ENCODE measurements at regions of chr9 and their contacts with region 1.

Region 1: DNA sequence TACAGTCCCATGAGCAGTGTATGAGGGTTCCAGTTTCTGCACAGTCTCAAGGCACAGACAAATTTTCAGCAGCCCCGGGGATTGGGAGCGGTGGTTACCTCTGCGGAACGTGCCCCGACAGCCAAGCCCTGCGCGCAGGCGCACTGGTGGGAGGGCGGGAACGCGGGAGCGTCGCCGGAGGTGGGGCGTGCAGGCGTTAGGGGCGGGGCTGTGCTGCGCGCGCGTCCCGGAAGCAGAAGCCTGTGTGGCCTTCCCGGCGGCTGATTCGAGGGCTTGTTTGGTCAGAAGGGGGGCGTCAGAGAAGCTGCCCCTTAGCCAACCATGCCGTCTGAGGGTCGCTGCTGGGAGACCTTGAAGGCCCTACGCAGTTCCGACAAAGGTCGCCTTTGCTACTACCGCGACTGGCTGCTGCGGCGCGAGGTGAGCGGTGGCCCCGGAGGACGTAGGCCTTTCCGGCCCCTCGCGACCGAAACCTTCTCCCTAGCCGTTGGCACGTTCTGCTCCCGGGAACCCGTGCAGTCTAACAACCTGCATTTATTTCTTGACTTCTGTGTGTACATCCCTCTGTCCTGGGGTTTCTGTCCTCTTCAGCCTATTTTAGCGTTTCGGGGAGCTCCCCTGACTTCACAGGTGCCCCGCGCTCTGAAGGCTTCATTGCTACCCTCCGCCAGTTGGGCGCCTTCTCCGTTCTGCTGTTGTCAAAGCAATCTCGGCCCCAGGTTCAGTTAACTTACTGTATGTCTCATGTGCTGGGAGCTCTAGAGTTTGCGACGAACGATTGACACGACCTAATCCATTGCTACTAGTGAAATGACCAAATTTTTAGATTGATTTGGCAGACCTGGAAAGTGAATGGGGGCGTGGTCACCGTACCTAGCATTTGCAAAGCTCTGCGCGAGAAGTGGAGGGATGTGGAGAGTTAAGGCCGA is at the start of gene GLE1:
- DNase-seq: peak; percentile 93
- H3K4me3 Mint-ChIP-seq: peak within 1 kb of the TSS; percentile 89
- H3K27ac Mint-ChIP-seq: peak within 1 kb of the TSS; percentile 84
- H3K4me1 Mint-ChIP-seq: no peaks in the 10 kb centered on the region
- H3K27me3 Mint-ChIP-seq: no peaks in the 10 kb centered on the region
- CTCF ChIP-seq: no peak
- total RNA-seq, gene GLE1: 34.1 TPM in 2 replicates

Region 2: DNA sequence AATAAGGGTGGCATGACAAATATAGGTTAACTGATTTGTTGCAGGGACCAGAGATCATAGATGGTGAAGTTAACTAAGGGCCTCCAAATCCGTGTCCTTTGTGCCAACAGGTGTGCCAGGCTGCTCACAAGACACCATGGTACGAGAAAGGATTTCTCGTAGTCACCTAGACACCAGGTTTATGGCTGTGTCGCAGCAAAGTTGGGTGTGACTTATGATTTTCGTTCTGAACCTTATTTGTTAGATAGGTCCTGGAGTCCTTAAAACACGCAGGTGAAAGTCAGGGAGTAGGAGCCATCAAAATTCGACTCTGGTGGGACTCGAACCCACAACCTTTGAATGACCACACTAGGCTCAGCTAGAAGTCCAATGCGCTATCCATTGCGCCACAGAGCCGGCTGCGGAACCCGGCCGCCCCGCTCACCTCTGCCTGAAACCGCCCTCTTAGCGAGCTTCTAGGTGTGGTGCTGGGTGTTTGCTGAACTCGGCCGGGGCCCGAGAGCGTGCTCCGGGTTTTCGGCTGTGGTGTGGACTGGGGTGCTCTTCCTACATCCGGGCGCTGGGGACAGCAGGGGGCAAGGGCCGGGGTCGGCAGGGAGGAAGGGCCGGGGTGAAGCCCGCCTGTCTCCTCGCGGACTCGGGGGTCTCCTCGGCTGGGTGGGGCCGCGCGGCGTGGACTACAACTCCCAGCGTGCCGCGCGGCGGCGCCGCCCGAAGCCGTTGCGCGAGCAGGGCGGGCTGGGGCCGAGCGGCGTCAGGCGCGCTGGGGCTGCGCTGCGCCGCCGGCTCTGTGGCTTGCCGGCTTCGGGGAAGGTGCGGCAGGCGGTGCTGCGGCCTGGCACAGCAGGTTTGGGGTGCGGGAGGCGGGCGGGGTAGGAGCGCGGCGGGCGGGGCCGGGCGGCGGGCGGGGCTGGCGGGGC is 164.7 kb before region 1 on chr9 and contains the start of gene SLC27A4:
- CTCF ChIA-PET with region 1: no interaction called
- POLR2A ChIA-PET with region 1: no interaction called
- intact Hi-C with region 1: no loop called
- DNase-seq: peak; percentile 91
- H3K4me3 Mint-ChIP-seq: peak within 1 kb of the TSS; percentile 92
- H3K27ac Mint-ChIP-seq: peak within 1 kb of the TSS; percentile 93
- H3K4me1 Mint-ChIP-seq: peaks cover 6% of the 10 kb centered on the region
- H3K27me3 Mint-ChIP-seq: no peaks in the 10 kb centered on the region
- CTCF ChIP-seq: no peak
- total RNA-seq, gene SLC27A4: 17.0 and 18.8 TPM in 2 replicates

Region 3: DNA sequence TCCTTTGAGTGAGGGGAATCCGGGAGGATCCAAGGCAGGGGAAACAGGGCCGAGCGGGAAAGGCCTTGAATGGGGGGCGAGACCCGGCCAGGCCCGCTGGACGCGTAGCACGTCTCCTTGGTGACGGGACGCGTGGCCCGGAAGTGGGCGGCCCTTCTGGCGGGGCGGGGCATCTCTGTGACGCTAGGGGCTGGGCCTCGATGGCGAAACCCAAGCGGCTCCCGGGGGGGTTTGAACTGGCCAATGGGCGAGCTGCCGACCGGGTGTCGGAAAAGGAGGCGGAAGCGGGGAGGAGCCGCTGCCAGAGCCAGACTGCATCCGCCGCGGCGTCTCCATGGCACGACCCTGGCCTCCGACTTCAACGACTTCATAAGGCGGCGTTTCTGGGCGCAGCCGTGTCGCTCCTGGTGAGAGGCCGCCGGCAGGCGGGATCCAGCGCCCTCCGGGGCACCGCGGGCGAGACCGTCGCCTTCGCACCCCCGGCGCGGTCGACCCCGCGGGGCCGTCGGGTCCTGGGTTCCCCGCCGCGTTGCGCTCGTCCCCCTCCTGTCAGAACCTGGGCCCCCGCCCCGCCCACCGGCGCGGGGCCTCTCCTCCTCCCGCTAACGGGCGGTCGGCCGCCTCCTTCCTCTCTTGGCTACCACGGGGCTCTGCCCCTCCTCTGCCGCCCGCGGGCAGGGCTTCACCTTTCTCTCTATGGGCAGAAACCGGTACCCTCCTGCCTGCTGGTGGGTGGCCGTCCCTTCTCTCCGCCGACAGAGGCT is 48.7 kb before region 1 on chr9 and contains the start of gene ODF2:
- CTCF ChIA-PET with region 1: no interaction called
- POLR2A ChIA-PET with region 1: interaction called, 15 read pairs
- intact Hi-C with region 1: no loop called
- DNase-seq: peak; percentile 95
- H3K4me3 Mint-ChIP-seq: peak within 1 kb of the TSS; percentile 98
- H3K27ac Mint-ChIP-seq: peak within 1 kb of the TSS; percentile 96
- H3K4me1 Mint-ChIP-seq: no peaks in the 10 kb centered on the region
- H3K27me3 Mint-ChIP-seq: no peaks in the 10 kb centered on the region
- CTCF ChIP-seq: no peak
- total RNA-seq, gene ODF2: 34.4 and 37.3 TPM in 2 replicates

Region 4: DNA sequence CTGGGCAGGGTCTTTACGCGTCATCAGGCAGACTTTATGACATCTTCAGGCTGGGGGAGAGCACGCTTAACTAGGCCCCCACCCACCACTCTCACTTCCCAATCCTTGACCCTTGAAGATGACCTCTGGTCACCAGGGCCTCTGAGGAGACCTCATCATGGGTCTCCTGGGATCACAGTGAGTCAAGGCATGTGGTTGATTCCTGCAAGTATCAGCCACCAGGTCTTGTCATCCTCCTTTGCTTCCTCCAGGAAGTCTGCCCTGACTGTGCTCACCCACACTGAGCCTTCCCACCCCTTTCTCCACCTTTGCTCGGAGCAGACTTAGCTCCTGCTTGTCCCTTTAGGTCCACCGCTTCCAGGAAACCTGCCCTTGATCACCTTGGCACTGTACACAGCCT is 31.6 kb before region 1 on chr9:
- CTCF ChIA-PET with region 1: no interaction called
- POLR2A ChIA-PET with region 1: no interaction called
- intact Hi-C with region 1: no loop called
- DNase-seq: no peak
- H3K4me3 Mint-ChIP-seq: no peak overlapping the region
- H3K27ac Mint-ChIP-seq: peak overlapping the region; percentile 29
- H3K4me1 Mint-ChIP-seq: peaks cover 6% of the 10 kb centered on the region
- H3K27me3 Mint-ChIP-seq: no peaks in the 10 kb centered on the region
- CTCF ChIP-seq: no peak

Region 5: DNA sequence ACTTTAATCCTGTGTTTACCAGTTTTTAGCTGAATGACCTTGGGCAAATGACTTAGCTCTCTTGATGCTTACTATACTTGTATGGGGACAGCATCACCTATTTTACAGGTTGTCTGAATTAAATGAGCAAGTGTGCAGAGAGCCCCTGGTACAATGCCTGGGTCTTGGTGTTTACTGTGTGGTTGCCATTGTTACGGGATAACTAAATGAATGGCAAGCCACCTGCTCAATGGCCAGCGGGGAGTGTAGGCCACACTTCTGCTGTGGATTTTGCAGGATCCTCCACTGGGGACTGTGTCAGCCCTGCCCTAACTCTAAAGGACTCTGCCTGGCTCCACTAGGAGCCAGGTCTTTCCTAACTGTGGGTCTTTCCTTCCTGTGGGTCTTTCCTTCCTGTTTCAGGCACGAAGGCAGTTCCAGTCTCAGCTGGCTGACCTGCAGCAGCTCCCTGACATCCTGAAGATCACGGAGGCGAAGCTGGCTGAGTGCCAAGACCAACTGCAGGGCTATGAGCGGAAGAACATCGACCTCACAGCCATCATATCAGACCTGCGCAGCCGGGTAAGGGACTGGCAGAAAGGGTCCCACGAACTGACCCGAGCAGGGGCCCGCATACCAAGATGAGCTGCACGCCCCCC is 10.5 kb before region 1 on chr9:
- CTCF ChIA-PET with region 1: interaction called, 4 read pairs
- POLR2A ChIA-PET with region 1: interaction called, 16 read pairs
- intact Hi-C with region 1: no loop called
- DNase-seq: no peak
- H3K4me3 Mint-ChIP-seq: no peak overlapping the region
- H3K27ac Mint-ChIP-seq: no peak overlapping the region
- H3K4me1 Mint-ChIP-seq: no peaks in the 10 kb centered on the region
- H3K27me3 Mint-ChIP-seq: no peaks in the 10 kb centered on the region
- CTCF ChIP-seq: no peak

Region 6: GRCh38 chr9:128595471-128595870 is 90.7 kb after region 1 on chr9:
- CTCF ChIA-PET with region 1: no interaction called
- POLR2A ChIA-PET with region 1: no interaction called
- intact Hi-C with region 1: no loop called
- DNase-seq: no peak
- H3K4me3 Mint-ChIP-seq: no peak overlapping the region
- H3K27ac Mint-ChIP-seq: no peak overlapping the region
- H3K4me1 Mint-ChIP-seq: no peaks in the 10 kb centered on the region
- H3K27me3 Mint-ChIP-seq: no peaks in the 10 kb centered on the region
- CTCF ChIP-seq: no peak

Measured in MCF 10A (cell line).